GM10248 (cell line): ENCODE measurements at regions of chr3 and their contacts with region 1.

Region 1: GRCh38 chr3:41198950-41199865 is at the start of gene CTNNB1:
- DNase-seq: peak; percentile 83
- CTCF ChIP-seq: no peak

Region 2: DNA sequence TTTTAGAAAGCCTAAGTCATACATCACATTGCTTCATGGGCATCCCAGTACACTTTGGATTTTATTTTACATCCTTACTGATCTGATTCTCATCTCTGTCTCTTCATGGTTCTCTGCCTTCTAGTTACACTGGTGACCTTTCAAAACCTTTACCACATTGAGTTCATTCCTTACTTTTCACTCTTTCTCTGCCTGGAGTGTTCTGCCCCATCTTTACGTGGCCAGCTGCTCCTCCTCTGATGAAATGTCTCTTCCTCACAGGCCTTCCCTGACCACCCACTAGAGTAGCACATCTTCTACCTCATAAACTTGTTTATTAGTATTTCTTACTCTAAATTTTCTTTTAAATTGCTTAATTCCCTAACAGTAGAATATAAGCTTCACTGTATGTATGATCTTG is 17.8 kb after region 1 on chr3:
- CTCF ChIA-PET with region 1: interaction called, 10 read pairs
- POLR2A ChIA-PET with region 1: interaction called, 22 read pairs
- DNase-seq: no peak
- CTCF ChIP-seq: no peak